ENCODE measurements at regions of chr9 and their contacts with region 1.

Region 1: GRCh38 chr9:120755827-120756434 is 37.3 kb downstream of the FBXW2 start:
- DNase-seq: peak; percentile 70
- CTCF ChIP-seq: peak; percentile 79

Region 2: DNA sequence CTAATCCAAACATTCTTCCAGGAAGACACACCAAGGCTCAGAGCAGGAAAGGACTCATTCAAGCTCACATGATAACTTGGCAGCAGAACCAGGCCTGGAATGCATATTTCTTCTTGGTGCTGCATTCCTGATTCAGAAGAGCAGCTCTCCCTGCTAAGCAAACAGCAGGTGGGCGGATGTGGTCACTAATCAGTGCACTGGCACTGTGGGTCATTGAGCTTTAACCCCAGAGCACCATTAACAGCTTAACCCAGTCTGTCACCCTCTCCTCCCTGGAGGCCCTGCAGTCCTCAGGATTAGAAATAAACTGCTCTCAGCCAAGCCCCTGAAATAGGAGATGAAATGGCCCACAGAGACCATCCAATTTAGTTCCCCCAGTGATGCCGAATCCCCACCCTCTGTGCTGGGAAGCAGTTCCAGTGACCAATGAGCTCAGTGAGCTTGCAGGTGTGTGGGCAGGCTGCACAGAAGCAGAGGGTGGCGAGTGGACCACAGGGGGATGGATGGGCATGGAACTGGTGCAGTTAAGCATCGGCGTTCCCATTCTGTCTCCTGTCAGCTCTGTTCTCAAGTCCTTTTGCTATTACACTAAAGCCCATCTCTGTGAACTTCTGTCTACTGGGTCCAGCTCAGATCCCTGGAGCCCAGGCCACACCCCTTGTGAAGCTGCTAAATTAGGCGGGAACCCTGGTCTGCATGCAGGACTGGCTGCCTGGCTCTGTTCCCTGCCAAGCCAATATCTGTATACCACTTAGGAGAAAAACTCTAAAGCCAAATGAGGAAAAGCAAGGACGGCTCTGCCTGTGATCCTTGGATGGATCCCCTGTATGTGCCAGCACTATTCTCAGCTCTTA is 25.0 kb before region 1 on chr9:
- CTCF ChIA-PET with region 1: interaction called, 22 read pairs
- POLR2A ChIA-PET with region 1: no interaction called
- DNase-seq: no peak
- CTCF ChIP-seq: no peak

Region 3: GRCh38 chr9:120742951-120743416 is 12.9 kb before region 1 on chr9:
- CTCF ChIA-PET with region 1: interaction called, 43 read pairs
- POLR2A ChIA-PET with region 1: no interaction called
- DNase-seq: peak; percentile 68
- CTCF ChIP-seq: peak; percentile 36

Region 4: DNA sequence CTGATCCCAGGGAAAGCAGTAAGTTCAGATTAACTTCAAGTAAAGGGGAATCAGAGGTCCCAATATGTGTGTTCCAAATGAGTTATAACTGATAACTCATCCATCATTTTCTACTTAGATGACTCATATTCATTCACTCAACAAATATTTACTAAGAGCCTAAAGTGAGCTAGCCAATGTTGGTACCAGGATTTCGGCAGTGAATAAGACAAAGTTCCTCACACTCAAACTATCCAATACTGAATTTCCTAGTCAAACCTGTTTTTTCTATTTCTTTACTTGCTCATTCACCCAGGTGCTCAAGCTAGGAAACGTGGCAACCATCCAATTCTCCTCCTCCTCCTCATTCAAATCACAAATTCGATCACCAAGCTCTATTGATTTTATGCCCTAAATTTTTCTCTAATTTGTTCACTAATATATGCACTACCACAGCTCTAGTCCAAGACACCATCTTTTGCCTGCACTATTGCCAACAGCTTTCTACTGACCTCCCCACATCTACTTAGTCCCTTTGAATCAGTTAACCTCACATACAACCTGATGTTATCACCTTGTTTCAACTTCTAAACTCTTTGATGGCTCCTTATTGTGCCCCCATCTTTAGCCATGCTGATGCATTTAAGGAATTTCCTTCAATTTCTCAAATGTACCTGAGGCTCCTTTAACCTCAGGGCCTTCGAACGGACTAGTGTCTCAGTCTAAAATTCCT is 11.7 kb after region 1 on chr9:
- CTCF ChIA-PET with region 1: interaction called, 80 read pairs
- POLR2A ChIA-PET with region 1: no interaction called
- DNase-seq: no peak
- CTCF ChIP-seq: no peak

Region 5: DNA sequence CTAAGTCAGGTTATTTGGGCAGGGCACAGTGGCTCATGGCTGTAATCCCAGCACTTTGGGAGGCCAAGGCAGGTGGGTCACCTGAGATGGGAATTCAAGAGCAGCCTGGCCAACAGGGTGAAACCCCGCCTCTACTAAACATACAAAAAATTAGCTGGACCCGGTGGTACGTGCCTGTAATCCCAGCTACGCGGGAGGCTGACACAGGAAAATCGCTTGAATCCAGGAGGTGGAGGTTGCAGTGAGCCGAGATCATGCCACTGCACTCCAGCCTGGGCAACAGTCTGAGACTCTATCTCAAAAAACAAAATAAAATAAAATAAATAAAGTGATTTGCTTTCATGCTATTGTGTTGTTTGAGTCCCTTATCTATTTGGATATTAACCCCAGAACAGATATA is 45.5 kb after region 1 on chr9:
- CTCF ChIA-PET with region 1: no interaction called
- POLR2A ChIA-PET with region 1: no interaction called
- DNase-seq: no peak
- CTCF ChIP-seq: no peak